Panc1 (cell line): ENCODE measurements at regions of chr20 and their contacts with region 1.

Region 1: GRCh38 chr20:47577314-47577713 is 75.6 kb downstream of the NCOA3 start:
- DNase-seq: no peak
- ATAC-seq: no peak
- H3K4me3 ChIP-seq: no peak overlapping the region
- H3K27ac ChIP-seq: peak overlapping the region; percentile 67
- H3K4me1 ChIP-seq: peaks cover 51% of the 10 kb centered on the region
- H3K27me3 ChIP-seq: no peaks in the 10 kb centered on the region
- CTCF ChIP-seq: no peak

Region 2: DNA sequence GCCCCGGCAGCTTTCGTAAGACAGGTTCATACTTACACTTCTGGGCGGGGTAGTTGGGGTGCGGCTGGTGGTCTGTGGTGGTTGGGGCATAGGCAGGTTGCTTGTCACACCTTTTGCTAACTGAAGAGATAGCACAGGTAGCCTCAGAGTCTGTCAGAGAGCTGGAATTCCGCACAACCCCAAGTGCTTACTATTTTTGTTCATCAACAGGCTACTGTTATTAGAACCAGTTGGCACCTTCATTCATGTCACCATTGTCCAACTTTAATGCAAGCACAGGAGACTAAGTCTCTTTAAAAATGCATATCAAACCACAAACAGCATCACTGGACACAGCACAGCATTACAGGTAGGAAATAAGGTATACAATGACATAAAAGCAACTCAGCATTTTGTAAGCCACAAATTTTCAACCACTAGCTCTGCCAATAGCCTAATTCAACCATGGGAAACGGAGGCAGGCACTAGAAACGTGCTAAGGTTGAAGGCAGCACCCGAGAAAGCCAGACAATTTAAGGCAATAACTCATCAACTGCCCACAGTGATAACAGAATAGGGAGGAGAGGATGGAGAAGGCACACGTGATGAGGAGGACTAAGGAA is 364.6 kb before region 1 on chr20:
- CTCF ChIA-PET with region 1: no interaction called
- POLR2A ChIA-PET with region 1: no interaction called
- in situ Hi-C with region 1: no loop called
- intact Hi-C with region 1: no loop called
- DNase-seq: no peak
- ATAC-seq: no peak
- H3K4me3 ChIP-seq: no peak overlapping the region
- H3K27ac ChIP-seq: no peak overlapping the region
- H3K4me1 ChIP-seq: no peaks in the 10 kb centered on the region
- H3K27me3 ChIP-seq: no peaks in the 10 kb centered on the region
- CTCF ChIP-seq: no peak

Region 3: GRCh38 chr20:47561180-47561579 is 16.1 kb before region 1 on chr20:
- CTCF ChIA-PET with region 1: no interaction called
- POLR2A ChIA-PET with region 1: interaction called, 13 read pairs
- in situ Hi-C with region 1: no loop called
- intact Hi-C with region 1: no loop called
- DNase-seq: no peak
- ATAC-seq: no peak
- H3K4me3 ChIP-seq: no peak overlapping the region
- H3K27ac ChIP-seq: no peak overlapping the region
- H3K4me1 ChIP-seq: peaks cover 24% of the 10 kb centered on the region
- H3K27me3 ChIP-seq: no peaks in the 10 kb centered on the region
- CTCF ChIP-seq: no peak